ENCODE measurements at regions of chr4 and their contacts with region 1.

Region 1: GRCh38 chr4:6974138-6974848 is 64.7 kb downstream of the TBC1D14 start:
- DNase-seq: peak; percentile 56 to 76
- ATAC-seq: peak; percentile 77 to 87
- H3K4me3 ChIP-seq: no peak overlapping the region
- H3K27ac ChIP-seq: peak overlapping the region; percentile 4 to 88 (median 80)
- H3K4me1 ChIP-seq: peaks cover 36 to 37% of the 10 kb centered on the region in 2 donors
- H3K27me3 ChIP-seq: no peaks in the 10 kb centered on the region
- CTCF ChIP-seq: peak; percentile 95 to 98 (median 96)
- POLR2A ChIP-seq: no peak

Region 2: GRCh38 chr4:6390356-6390755 is 583.9 kb before region 1 on chr4:
- in situ Hi-C with region 1: no loop called
- intact Hi-C with region 1: no loop called
- DNase-seq: no peak
- ATAC-seq: no peak
- H3K4me3 ChIP-seq: no peak overlapping the region
- H3K27ac ChIP-seq: no peak overlapping the region
- H3K4me1 ChIP-seq: no peaks in the 10 kb centered on the region
- H3K27me3 ChIP-seq: peaks cover 0 to 9% (median 8%) of the 10 kb centered on the region in 3 donors
- CTCF ChIP-seq: no peak
- POLR2A ChIP-seq: no peak

Region 3: GRCh38 chr4:6892190-6892908 is 81.9 kb before region 1 on chr4:
- in situ Hi-C with region 1: no loop called
- intact Hi-C with region 1: no loop called
- DNase-seq: peak; percentile 64 to 79
- ATAC-seq: peak; percentile 75 to 77
- H3K4me3 ChIP-seq: peak overlapping the region in 2 of 4 donors; percentile 3 to 8
- H3K27ac ChIP-seq: peak overlapping the region; percentile 55 to 76 (median 66)
- H3K4me1 ChIP-seq: peaks cover 12 to 23% of the 10 kb centered on the region in 2 donors
- H3K27me3 ChIP-seq: no peaks in the 10 kb centered on the region
- CTCF ChIP-seq: peak in 1 of 5 experiments; percentile 21
- POLR2A ChIP-seq: peak in 1 of 2 donors; percentile 15

Region 4: GRCh38 chr4:6909073-6909965 is 65.0 kb before region 1 on chr4 and contains the start of gene TBC1D14:
- in situ Hi-C with region 1: no loop called
- intact Hi-C with region 1: loop called (anchors 5 kb)
- DNase-seq: peak; percentile 85 to 86
- ATAC-seq: peak; percentile 85 to 88
- H3K4me3 ChIP-seq: peak within 1 kb of the TSS; percentile 73 to 100 (median 79)
- H3K27ac ChIP-seq: peak within 1 kb of the TSS; percentile 93 to 100 (median 98)
- H3K4me1 ChIP-seq: peaks cover 38 to 42% of the 10 kb centered on the region in 2 donors
- H3K27me3 ChIP-seq: no peaks in the 10 kb centered on the region
- CTCF ChIP-seq: peak; percentile 5 to 62 (median 36)
- POLR2A ChIP-seq: peak; percentile 81 to 87
- total RNA-seq, gene TBC1D14: 36.0 to 56.2 (median 41.4) TPM

Measured in gastrocnemius medialis (tissue), 4 donors.